ENCODE measurements at regions of chr9 and their contacts with region 1.

Region 1: GRCh38 chr9:132079391-132080091 is at the start of gene MED27:
- DNase-seq: peak; percentile 90
- H3K4me3 Mint-ChIP-seq: peak within 1 kb of the TSS; percentile 98
- H3K27ac Mint-ChIP-seq: peak within 1 kb of the TSS; percentile 94
- H3K4me1 Mint-ChIP-seq: peaks cover 45% of the 10 kb centered on the region
- H3K27me3 Mint-ChIP-seq: peaks cover 8% of the 10 kb centered on the region
- total RNA-seq, gene MED27: 41.0 and 45.6 TPM in 2 replicates

Region 2: GRCh38 chr9:131762356-131762932 is 317.1 kb before region 1 on chr9:
- intact Hi-C with region 1: loop called (anchors 5 kb)
- DNase-seq: peak; percentile 62
- H3K4me3 Mint-ChIP-seq: no peak overlapping the region
- H3K27ac Mint-ChIP-seq: no peak overlapping the region
- H3K4me1 Mint-ChIP-seq: peaks cover 12% of the 10 kb centered on the region
- H3K27me3 Mint-ChIP-seq: peaks cover 35% of the 10 kb centered on the region

Region 3: GRCh38 chr9:132006677-132007370 is 72.7 kb before region 1 on chr9:
- intact Hi-C with region 1: loop called (anchors 2 kb)
- DNase-seq: peak; percentile 50
- H3K4me3 Mint-ChIP-seq: peak overlapping the region; percentile 58
- H3K27ac Mint-ChIP-seq: peak overlapping the region; percentile 62
- H3K4me1 Mint-ChIP-seq: peaks cover 66% of the 10 kb centered on the region
- H3K27me3 Mint-ChIP-seq: peaks cover 2% of the 10 kb centered on the region

Region 4: DNA sequence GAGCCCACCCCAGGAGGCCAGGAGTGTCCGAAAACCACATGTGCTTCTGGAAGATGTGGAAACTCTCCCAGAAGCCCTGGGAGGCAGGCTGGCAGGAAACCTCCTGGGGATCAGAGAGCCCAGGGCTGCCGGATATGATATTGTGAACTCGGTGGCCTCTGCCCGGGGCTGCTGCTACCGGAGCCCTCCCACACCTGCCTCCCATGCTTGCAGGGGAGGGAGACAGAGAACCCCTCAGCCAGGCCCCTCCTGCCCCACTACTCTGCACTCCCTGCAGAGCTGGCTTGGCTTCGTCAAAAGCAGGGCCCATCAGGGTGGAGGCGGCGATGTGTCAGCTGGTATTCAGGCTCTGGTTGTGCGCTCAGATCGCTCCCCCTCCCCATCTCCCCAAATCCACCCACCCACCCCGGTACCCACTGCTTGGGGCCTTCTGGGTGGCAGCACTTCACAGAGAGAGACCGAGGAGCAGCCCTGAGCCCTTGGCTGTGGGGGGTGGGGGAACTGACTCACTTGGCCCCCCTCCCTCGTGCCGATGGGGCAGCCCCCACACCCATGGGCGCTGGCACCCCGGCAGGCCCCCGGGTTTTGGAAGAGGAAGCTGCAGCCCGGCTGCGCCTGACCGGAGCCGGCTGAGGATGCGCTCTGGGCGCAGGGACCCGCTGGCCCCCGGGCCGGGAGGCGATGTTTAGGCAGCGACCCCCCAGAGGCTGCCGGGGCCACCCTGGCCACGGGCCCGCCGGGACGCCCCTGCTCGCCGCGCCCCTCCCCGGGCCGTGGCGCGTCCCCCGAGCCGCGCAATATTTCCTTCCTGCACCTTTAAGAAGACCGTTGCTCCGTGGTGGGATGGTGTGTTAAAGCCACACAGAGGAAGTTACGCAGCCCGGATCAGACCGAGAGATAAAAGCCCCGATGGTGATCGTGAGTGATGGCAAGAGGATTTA is 81.5 kb after region 1 on chr9:
- intact Hi-C with region 1: loop called (anchors 2 kb)
- DNase-seq: peak; percentile 57
- H3K4me3 Mint-ChIP-seq: peak overlapping the region; percentile 98
- H3K27ac Mint-ChIP-seq: peak overlapping the region; percentile 97
- H3K4me1 Mint-ChIP-seq: peaks cover 19% of the 10 kb centered on the region
- H3K27me3 Mint-ChIP-seq: peaks cover 56% of the 10 kb centered on the region

Region 5: DNA sequence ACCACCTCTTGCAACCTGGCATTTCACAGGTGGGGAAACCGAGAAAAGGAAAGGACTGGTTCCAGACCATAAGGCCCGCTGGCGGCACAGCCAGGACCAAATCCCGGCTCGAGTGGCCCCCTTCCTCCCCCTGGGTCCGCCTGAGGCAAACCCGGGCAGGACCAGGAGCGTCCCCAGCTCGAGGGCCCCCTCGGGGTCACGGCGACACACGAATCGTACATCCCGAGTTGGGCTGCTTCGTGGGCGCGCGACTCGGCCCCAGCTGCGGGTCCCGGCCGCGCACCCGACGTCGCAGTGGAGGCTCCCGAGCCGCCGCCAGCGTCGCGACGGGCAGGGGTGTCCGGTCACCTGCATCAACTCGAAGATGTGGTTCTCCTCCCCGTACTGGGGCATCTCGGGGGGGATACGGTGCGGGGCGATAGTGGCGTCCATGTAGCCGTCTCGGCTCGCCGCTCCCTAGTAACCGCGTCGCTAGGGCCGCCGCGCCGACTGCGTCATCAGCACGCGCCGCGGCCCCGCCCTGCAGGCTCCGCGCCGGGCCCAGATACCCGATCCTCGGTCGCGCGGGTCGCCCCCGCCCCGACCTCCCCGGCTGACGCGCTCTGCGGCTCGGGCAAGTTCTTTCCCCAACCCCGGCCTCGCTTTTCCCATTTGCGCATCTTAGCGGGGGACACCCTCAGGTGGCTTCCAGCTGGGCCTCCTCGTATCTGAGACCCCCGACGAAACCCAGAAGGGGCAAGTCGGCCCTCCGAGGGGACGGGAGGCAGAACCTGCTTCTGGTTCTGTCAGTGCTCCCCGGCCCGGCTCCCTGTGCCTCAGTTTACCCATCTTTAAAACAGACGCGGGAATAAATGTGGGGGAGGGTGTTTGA is 798.5 kb after region 1 on chr9 and contains the start of gene AK8:
- intact Hi-C with region 1: loop called (anchors 5 kb)
- DNase-seq: peak; percentile 75
- H3K4me3 Mint-ChIP-seq: peak within 1 kb of the TSS; percentile 84
- H3K27ac Mint-ChIP-seq: peak within 1 kb of the TSS; percentile 68
- H3K4me1 Mint-ChIP-seq: peaks cover 27% of the 10 kb centered on the region
- H3K27me3 Mint-ChIP-seq: peaks cover 9% of the 10 kb centered on the region
- total RNA-seq, gene AK8: not detected in 2 replicates

Measured in activated T-helper 1 cell treated with anti-CD3 and anti-CD28 coated beads, Interleukin-12 subunit alpha, Interleukin-12 subunit beta, Interleukin-2, Interleukin-4 antibody, amounts not matched to agents 30 ng/mL and 10 ng/mL and 1 ng/mL, durations not matched to agents 14 hours and 24 hours and 36 hours (primary cell).